GM12878 (cell line): ENCODE measurements at regions of chr5 and their contacts with region 1.

Region 1: DNA sequence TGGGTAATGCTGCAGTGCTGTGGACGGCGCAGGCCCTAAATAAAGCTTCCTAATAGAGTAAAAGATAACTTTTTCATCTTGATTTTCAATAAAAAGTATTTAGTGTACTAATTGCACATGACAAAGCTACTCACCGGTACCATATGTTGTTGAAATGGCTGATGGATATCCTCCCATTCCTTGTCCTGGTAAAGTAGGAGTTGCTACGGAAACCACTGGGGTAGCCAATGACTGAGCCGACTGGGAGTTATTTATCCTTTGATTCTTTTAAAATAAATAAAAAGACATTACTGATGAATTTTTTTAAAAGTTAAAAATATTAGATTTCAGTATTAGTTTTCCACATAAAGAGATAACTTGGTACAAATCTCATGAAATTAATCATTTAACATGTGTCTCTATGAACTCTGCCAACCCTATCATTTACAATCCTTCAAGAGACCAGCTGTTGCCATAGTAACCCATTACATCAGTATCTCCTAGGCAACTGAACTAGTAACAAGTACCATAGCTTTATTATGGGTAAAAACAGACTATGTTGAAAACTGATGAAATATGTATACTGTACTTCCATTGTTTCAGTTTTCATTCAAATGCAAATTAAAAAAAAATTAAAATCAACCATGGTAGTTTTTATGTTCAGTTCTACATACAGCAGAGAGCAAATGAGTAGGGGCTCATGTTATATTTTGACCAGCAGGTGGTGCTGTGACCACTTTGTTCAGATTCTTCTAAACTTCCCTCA is 153.7 kb downstream of the MEF2C start:
- DNase-seq: peak; percentile 73
- ATAC-seq: peak; percentile 46
- H3K4me3 ChIP-seq: no peak overlapping the region
- H3K27ac ChIP-seq: no peak overlapping the region
- H3K4me1 ChIP-seq: peaks cover 34% of the 10 kb centered on the region
- H3K27me3 ChIP-seq: no peaks in the 10 kb centered on the region
- CTCF ChIP-seq: peak; percentile 54 to 77 (median 58); a peak in 5 of 6 replicates
- EP300 ChIP-seq: no peak
- POLR2A ChIP-seq: no peak
- RAD21 ChIP-seq: peak; percentile 85

Region 2: DNA sequence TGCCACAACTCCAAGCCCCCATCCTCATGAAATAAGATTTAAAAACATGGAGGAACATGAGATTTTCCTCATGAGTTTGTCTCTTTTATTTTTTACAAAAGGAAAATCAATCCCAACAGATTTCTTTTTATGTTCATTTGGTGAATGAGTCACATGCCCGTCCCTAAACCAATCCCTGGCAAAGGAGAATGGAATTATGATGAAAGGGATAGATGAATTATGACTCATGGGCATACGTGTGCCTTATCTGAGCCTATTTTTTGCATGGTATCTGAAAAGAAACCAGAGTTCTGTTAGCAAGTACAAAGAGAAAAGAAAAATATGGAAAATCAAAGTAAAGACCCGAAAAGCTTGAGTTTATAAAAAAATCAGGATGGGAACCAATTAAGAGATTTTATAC is 193.1 kb before region 1 on chr5:
- CTCF ChIA-PET with region 1: no interaction called
- POLR2A ChIA-PET with region 1: no interaction called
- RAD21 ChIA-PET with region 1: no interaction called
- SMC1A ChIA-PET with region 1: no interaction called
- in situ Hi-C with region 1: no loop called
- intact Hi-C with region 1: no loop called
- DNase-seq: no peak
- ATAC-seq: no peak
- H3K4me3 ChIP-seq: no peak overlapping the region
- H3K27ac ChIP-seq: no peak overlapping the region
- H3K4me1 ChIP-seq: no peaks in the 10 kb centered on the region
- H3K27me3 ChIP-seq: no peaks in the 10 kb centered on the region
- CTCF ChIP-seq: no peak
- EP300 ChIP-seq: no peak
- POLR2A ChIP-seq: no peak
- RAD21 ChIP-seq: no peak

Region 3: DNA sequence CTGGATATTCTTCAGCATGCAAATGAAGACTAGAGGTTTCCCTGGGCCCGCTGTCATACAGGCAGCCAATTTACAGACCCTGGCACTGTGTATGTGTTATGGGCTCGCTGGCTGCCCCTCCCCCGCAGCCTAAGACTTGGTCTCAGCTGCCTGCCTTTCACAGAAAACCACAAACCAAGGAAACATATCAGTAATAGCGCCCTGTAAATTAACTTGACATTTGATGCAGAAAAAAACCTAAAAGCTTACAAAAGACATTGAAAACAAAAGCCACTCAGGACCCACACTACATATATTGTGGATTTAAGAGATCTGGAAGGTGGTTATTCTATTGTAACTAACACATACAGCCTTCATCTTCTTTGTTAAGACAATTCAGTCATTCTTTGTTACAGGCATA is 173.6 kb before region 1 on chr5:
- CTCF ChIA-PET with region 1: no interaction called
- POLR2A ChIA-PET with region 1: no interaction called
- RAD21 ChIA-PET with region 1: no interaction called
- SMC1A ChIA-PET with region 1: no interaction called
- in situ Hi-C with region 1: no loop called
- intact Hi-C with region 1: no loop called
- DNase-seq: no peak
- ATAC-seq: no peak
- H3K4me3 ChIP-seq: no peak overlapping the region
- H3K27ac ChIP-seq: no peak overlapping the region
- H3K4me1 ChIP-seq: no peaks in the 10 kb centered on the region
- H3K27me3 ChIP-seq: no peaks in the 10 kb centered on the region; a peak in 1 of 4 replicates
- CTCF ChIP-seq: no peak
- EP300 ChIP-seq: no peak
- POLR2A ChIP-seq: no peak
- RAD21 ChIP-seq: no peak

Region 4: GRCh38 chr5:88594441-88594840 is 134.8 kb before region 1 on chr5:
- CTCF ChIA-PET with region 1: no interaction called
- POLR2A ChIA-PET with region 1: no interaction called
- RAD21 ChIA-PET with region 1: no interaction called
- SMC1A ChIA-PET with region 1: no interaction called
- in situ Hi-C with region 1: no loop called
- intact Hi-C with region 1: no loop called
- DNase-seq: no peak
- ATAC-seq: no peak
- H3K4me3 ChIP-seq: no peak overlapping the region
- H3K27ac ChIP-seq: no peak overlapping the region
- H3K4me1 ChIP-seq: no peaks in the 10 kb centered on the region
- H3K27me3 ChIP-seq: no peaks in the 10 kb centered on the region
- CTCF ChIP-seq: no peak
- EP300 ChIP-seq: no peak
- POLR2A ChIP-seq: no peak
- RAD21 ChIP-seq: no peak

Region 5: DNA sequence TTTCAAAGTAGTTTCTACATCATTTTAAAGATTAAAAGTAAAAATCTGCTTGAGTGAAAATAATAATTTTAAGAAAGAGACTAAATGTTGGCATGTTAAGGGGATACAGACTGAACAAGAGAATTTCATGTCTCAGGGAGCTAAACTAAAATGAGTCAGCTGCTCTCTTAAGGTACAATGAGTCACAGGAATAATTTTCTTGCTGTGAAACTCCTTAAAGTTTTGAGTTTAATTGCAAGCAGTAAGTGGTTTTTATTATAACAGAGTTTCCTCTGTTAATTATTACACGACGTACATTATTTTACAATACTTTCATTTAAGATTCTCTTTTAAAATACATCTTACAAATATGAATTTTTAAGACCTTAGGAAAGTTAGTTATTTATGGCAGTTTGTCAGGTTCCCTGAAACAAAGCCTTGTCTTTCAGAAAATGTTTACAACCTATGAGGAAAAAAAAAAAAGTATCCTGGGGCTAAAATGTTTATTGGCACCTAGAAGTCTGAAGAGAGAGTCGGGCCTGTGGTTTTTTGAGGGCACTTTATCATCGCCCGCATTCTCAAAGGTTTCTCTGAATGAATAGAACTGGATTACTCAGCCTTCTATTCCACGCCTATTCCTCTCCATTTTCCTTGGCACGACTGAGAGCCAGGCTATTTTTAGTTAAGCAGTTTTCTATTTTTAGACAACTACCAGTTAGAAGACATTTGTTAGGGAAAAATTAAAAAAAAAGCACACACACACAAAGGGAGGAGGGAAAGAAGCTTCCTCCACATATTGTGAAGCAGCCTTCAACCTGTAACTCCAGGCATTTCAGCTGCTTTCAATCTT is 56.3 kb after region 1 on chr5:
- CTCF ChIA-PET with region 1: interaction called, 39 read pairs
- POLR2A ChIA-PET with region 1: interaction called, 5 read pairs
- RAD21 ChIA-PET with region 1: interaction called, 14 read pairs
- SMC1A ChIA-PET with region 1: interaction called, 65 read pairs
- in situ Hi-C with region 1: no loop called
- intact Hi-C with region 1: loop called (anchors 2 kb)
- DNase-seq: peak; percentile 43
- ATAC-seq: peak; percentile 79
- H3K4me3 ChIP-seq: 0 out of 2 replicates have a peak overlapping the region, but pooled peaks have one; percentile 11
- H3K27ac ChIP-seq: peak overlapping the region; percentile 65
- H3K4me1 ChIP-seq: peaks cover 7% of the 10 kb centered on the region; the same call in 1 of the 2 replicates
- H3K27me3 ChIP-seq: no peaks in the 10 kb centered on the region
- CTCF ChIP-seq: no peak
- EP300 ChIP-seq: peak in 1 of 2 experiments; percentile 61; a peak in 3 of 4 replicates
- POLR2A ChIP-seq: no peak
- RAD21 ChIP-seq: no peak

Region 6: GRCh38 chr5:88845081-88845697 is 115.9 kb after region 1 on chr5:
- CTCF ChIA-PET with region 1: no interaction called
- POLR2A ChIA-PET with region 1: no interaction called
- RAD21 ChIA-PET with region 1: interaction called, 12 read pairs
- SMC1A ChIA-PET with region 1: interaction called, 5 read pairs
- in situ Hi-C with region 1: no loop called
- intact Hi-C with region 1: no loop called
- DNase-seq: peak; percentile 73
- ATAC-seq: peak; percentile 82
- H3K4me3 ChIP-seq: no peak overlapping the region
- H3K27ac ChIP-seq: peak overlapping the region; percentile 56
- H3K4me1 ChIP-seq: peaks cover 3% of the 10 kb centered on the region; the same call in 1 of the 2 replicates
- H3K27me3 ChIP-seq: no peaks in the 10 kb centered on the region
- CTCF ChIP-seq: no peak
- EP300 ChIP-seq: peak; percentile 77 to 98
- POLR2A ChIP-seq: no peak
- RAD21 ChIP-seq: no peak

Region 7: GRCh38 chr5:89081360-89081759 is 352.1 kb after region 1 on chr5:
- CTCF ChIA-PET with region 1: interaction called, 39 read pairs
- POLR2A ChIA-PET with region 1: no interaction called
- RAD21 ChIA-PET with region 1: interaction called, 12 read pairs
- SMC1A ChIA-PET with region 1: interaction called, 43 read pairs
- in situ Hi-C with region 1: no loop called
- intact Hi-C with region 1: no loop called
- DNase-seq: peak; percentile 62
- ATAC-seq: peak; percentile 89
- H3K4me3 ChIP-seq: peak overlapping the region; percentile 3; the same call in 1 of the 2 replicates
- H3K27ac ChIP-seq: peak overlapping the region; percentile 55
- H3K4me1 ChIP-seq: peaks cover 11% of the 10 kb centered on the region
- H3K27me3 ChIP-seq: no peaks in the 10 kb centered on the region
- CTCF ChIP-seq: peak in 1 of 3 experiments; percentile 36; a peak in 2 of 6 replicates
- EP300 ChIP-seq: 0 out of 4 replicates have a peak, but pooled peaks of 1 of the 2 experiments have one; percentile 21
- POLR2A ChIP-seq: no peak
- RAD21 ChIP-seq: peak; percentile 54

Region 8: GRCh38 chr5:89343666-89344065 is 614.4 kb after region 1 on chr5:
- CTCF ChIA-PET with region 1: interaction called, 4 read pairs
- POLR2A ChIA-PET with region 1: no interaction called
- RAD21 ChIA-PET with region 1: interaction called, 6 read pairs
- SMC1A ChIA-PET with region 1: interaction called, 27 read pairs
- in situ Hi-C with region 1: no loop called
- intact Hi-C with region 1: loop called (anchors 2 kb)
- DNase-seq: peak; percentile 97
- ATAC-seq: peak; percentile 86
- H3K4me3 ChIP-seq: no peak overlapping the region
- H3K27ac ChIP-seq: peak overlapping the region; percentile 93
- H3K4me1 ChIP-seq: peaks cover 37% of the 10 kb centered on the region; the same call in 1 of the 2 replicates
- H3K27me3 ChIP-seq: no peaks in the 10 kb centered on the region
- CTCF ChIP-seq: no peak
- EP300 ChIP-seq: peak; percentile 100
- POLR2A ChIP-seq: no peak
- RAD21 ChIP-seq: peak; percentile 17

Region 9: GRCh38 chr5:90015584-90016018 is 1286.3 kb after region 1 on chr5:
- CTCF ChIA-PET with region 1: no interaction called
- POLR2A ChIA-PET with region 1: no interaction called
- RAD21 ChIA-PET with region 1: no interaction called
- SMC1A ChIA-PET with region 1: interaction called, 3 read pairs
- in situ Hi-C with region 1: loop called (anchors 10 kb)
- intact Hi-C with region 1: loop called (anchors 5 kb)
- DNase-seq: peak; percentile 82
- ATAC-seq: peak; percentile 96
- H3K4me3 ChIP-seq: no peak overlapping the region
- H3K27ac ChIP-seq: peak overlapping the region; percentile 7
- H3K4me1 ChIP-seq: peaks cover 28% of the 10 kb centered on the region
- H3K27me3 ChIP-seq: no peaks in the 10 kb centered on the region
- CTCF ChIP-seq: 0 out of 6 replicates have a peak, but pooled peaks of 1 of the 3 experiments have one; percentile 4
- EP300 ChIP-seq: peak; percentile 50 to 73
- POLR2A ChIP-seq: no peak
- RAD21 ChIP-seq: no peak